ENCODE measurements at regions of chr16 and their contacts with region 1.

Region 1: DNA sequence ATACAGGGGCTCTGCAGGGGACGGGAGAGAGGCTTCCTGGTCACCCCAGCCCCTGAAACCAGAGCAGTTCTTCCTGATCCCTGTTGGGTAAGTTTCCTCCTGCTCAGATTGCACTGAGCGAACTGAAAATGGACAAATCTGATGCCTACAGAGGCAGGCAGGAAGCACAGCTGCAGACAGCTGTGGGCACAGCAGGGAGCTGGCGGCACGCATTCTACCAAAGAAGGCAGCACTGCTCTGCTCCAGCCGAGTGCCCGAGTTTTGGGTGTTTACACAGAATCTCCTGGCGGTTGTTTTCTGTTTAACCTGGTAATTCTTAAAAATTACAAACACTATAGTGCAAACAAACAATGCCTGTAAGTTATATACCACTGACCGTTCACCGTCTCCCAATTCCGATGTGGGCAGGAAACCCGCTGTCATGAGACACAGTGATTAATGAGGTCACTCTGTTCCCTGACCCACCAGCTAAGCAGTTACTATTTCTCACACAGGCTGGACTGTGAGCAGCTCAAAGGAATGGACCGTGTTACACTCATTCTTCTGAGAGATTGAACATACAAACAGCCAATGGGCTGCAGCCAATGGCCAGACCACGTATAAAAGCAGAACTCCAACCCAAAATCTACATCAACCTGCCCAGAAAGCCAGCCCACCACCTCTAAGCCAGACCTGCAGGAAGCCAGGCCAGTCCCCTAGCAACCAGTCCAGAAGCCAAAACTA is 25.5 kb downstream of the NSMCE1 start:
- DNase-seq: no peak
- CTCF ChIP-seq: no peak

Region 2: DNA sequence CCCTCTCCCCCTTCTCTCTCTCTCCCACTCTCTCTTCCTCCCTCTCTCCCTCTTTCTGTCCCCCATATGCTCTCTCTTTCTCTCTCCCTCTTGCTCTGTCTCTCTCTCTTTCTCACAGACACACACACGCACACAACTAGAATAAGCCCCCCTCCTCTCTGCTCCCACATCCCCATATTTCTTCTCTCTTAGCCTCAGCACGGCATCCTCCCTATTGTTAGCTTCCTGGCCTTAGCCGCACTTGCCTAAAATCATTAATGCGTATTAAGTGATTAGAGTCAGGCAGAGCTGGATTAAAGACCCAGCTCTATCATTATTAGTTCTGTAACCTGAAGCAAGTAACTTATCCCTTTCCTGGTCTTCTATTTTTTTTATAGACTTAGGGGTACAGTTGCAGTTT is 495.3 kb before region 1 on chr16:
- in situ Hi-C with region 1: no loop called
- DNase-seq: no peak
- CTCF ChIP-seq: no peak

Region 3: DNA sequence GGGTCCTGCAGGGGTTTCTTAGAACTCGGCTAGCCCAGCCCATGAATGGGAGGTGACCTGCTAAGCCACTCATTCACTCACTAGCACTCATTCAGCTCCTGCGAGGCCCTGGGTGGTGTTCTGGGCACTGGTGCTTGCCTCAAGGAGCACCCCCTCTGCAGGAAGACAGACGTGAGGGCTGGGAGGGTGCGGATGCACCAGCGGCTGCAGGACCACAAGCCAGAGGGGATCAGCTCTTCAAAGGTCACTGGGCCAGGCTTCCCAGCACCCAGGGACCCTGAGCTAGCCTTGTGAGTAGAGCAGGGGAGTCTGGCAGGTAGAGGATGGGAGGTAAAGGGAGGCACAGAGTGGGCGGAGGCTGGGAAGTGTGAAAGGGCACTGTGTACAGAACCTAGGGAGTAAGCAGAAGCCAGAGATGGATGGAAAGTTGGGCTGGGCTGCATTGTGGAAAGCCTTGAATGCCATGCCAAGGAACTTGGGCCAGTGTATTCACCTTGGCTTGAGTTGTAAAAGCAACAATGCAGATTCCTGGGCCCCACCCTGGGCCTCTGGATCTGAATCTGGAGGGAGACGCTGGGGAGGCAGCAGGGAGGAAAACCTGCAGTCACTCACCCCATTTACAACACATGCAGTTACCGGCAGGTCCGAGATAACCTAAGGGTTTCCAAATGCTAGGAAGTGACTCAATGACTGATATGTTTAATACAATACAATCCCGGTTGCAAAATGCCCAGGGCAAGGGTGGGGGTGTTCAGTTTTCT is 72.4 kb after region 1 on chr16:
- in situ Hi-C with region 1: loop called (anchors 5 kb)
- DNase-seq: peak; percentile 54
- CTCF ChIP-seq: peak; percentile 8

Region 4: GRCh38 chr16:27628241-27628942 is 385.4 kb after region 1 on chr16:
- in situ Hi-C with region 1: no loop called
- DNase-seq: no peak
- CTCF ChIP-seq: no peak